Psoas muscle (tissue), 8 donors: ENCODE measurements at regions of chr2 and their contacts with region 1.

Region 1: GRCh38 chr2:232013701-232014353 is 52.3 kb downstream of the DIS3L2 start:
- DNase-seq: peak in 1 of 2 donors; percentile 16
- ATAC-seq: peak in 3 of 4 donors; percentile 60 to 90 (median 78)
- H3K4me3 ChIP-seq: no peak overlapping the region
- H3K27ac ChIP-seq: no peak overlapping the region
- H3K4me1 ChIP-seq: peaks cover 13% of the 10 kb centered on the region
- H3K27me3 ChIP-seq: no peaks in the 10 kb centered on the region
- CTCF ChIP-seq: no peak

Region 2: GRCh38 chr2:231977430-231977829 is 36.4 kb before region 1 on chr2:
- intact Hi-C with region 1: loop called in 1 of 2 experiments (anchors 5 kb)
- DNase-seq: no peak
- ATAC-seq: no peak
- H3K4me3 ChIP-seq: no peak overlapping the region
- H3K27ac ChIP-seq: no peak overlapping the region
- H3K4me1 ChIP-seq: no peaks in the 10 kb centered on the region
- H3K27me3 ChIP-seq: no peaks in the 10 kb centered on the region
- CTCF ChIP-seq: no peak